ENCODE measurements at regions of chr2 and their contacts with region 1.

Region 1: DNA sequence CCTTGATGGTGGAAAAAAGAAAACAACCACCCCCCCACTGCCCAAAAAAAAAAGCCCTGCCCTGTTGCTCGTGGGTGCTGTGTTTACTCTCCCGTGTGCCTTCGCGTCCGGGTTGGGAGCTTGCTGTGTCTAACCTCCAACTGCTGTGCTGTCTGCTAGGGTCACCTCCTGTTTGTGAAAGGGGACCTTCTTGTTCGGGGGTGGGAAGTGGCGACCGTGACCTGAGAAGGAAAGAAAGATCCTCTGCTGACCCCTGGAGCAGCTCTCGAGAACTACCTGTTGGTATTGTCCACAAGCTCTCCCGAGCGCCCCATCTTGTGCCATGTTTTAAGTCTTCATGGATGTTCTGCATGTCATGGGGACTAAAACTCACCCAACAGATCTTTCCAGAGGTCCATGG is 28.0 kb downstream of the MAL start:
- DNase-seq: no peak
- ATAC-seq: peak; percentile 55; the same call in 1 of the 2 replicates
- H3K4me3 ChIP-seq: no peak overlapping the region
- H3K27ac ChIP-seq: no peak overlapping the region
- H3K4me1 ChIP-seq: peaks cover 0 to 3% of the 10 kb centered on the region in 2 experiments; a peak in 1 of 4 replicates
- H3K27me3 ChIP-seq: peaks cover 12% of the 10 kb centered on the region; the same call in 1 of the 2 replicates
- CTCF ChIP-seq: peak; percentile 20 to 37 (median 32); a peak in 3 of 6 replicates
- POLR2A ChIP-seq: no peak
- RAD21 ChIP-seq: peak; percentile 38; the same call in 1 of the 2 replicates

Region 2: DNA sequence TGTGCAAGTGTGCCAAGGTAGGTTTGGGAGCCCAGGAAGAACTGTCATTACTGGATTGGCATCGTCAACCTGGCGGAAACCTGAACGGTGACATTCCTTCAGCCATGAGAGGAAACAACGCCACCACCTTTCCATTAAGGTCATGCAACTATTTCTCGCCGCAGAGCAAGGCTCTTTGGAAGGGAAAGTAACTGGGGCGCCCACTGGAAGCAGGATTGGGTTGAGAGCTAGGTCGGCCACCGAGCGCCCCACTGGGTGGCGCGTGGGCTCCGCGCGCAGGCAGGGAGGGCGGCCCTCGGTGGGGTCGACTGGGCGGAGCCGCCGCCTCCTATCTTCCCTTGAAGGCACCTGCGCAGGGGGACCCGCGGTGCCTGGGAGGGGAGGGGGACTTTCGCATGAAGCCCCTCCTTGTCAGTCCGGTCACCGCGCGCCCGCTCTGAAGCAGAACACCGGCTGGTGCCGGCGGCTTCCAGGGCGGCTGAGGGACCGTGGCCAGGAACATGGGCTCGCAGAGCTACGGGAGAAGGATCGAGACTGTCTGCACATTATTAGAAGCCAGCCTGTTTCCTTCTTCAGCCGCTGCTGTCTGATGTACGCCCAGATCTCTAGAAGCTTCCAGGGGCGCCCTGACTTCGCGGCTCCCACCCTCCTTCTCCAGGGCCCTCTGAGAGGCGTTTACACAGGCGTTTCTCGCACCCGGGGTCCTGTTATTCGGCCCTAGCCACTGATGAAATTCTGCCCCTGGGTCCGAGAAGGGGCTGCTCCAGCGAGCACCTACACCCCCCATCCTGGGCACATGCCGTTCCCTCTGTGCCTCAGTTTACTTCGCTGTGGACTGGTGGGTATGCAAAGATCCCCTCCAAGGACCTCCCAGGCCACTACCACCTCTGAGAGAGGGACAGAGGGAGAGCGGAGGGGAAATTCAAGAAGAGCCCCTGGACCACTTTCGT is 55.3 kb before region 1 on chr2:
- CTCF ChIA-PET with region 1: no interaction called
- POLR2A ChIA-PET with region 1: no interaction called
- RAD21 ChIA-PET with region 1: no interaction called
- intact Hi-C with region 1: no loop called
- DNase-seq: no peak
- ATAC-seq: no peak
- H3K4me3 ChIP-seq: no peak overlapping the region
- H3K27ac ChIP-seq: no peak overlapping the region
- H3K4me1 ChIP-seq: no peaks in the 10 kb centered on the region
- H3K27me3 ChIP-seq: no peaks in the 10 kb centered on the region
- CTCF ChIP-seq: no peak
- POLR2A ChIP-seq: no peak
- RAD21 ChIP-seq: no peak

Region 3: DNA sequence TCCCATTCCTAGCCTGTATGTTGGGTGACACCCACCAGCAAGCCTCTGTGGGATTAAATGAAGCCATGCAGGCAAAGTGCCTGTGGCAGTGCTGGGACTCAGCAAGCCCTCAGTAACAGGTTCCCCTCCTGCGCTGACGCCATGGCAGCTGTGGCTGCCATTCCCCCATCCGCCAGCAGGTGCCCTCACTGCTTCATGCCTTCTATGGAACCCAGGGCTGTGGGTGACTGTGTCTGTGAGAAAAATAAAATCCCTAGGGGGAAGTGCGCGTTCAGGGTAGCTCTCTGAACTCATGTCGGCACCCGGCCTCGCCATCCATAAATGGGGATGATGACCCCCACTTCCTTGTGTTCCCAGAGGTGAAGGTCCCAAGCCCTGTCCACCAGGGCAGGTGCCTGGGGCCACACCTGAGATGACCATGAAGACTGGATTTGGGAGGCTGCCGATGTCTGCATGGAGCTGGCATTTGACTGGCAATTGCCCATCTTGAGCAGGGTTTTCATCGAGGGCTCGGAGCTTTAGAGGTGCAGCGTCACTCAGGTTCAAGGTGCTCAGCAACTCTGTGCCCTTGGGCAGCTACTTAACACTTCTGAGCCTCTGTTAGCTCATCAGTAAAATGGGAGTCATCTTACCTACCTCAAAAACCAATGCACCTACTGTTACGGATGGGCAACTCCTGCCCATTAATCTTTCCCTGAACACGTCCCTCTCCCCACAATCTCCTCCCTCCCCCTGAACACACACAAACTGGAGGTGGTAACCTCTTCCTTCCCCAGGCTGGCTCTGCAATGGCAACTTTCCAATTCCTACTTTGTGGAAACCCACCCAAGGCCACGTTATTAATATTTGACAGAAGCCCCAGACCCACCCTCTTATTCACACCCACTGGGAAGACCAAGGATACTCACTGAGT is 31.0 kb before region 1 on chr2:
- CTCF ChIA-PET with region 1: interaction called, 30 read pairs
- POLR2A ChIA-PET with region 1: no interaction called
- RAD21 ChIA-PET with region 1: no interaction called
- intact Hi-C with region 1: no loop called
- DNase-seq: peak; percentile 34
- ATAC-seq: peak; percentile 91
- H3K4me3 ChIP-seq: no peak overlapping the region
- H3K27ac ChIP-seq: no peak overlapping the region
- H3K4me1 ChIP-seq: peaks cover 0 to 8% of the 10 kb centered on the region in 2 experiments; a peak in 1 of 4 replicates
- H3K27me3 ChIP-seq: no peaks in the 10 kb centered on the region
- CTCF ChIP-seq: peak; percentile 83 to 95 (median 94); a peak in 5 of 6 replicates
- POLR2A ChIP-seq: no peak
- RAD21 ChIP-seq: peak; percentile 84

Region 4: GRCh38 chr2:95174031-95174542 is 120.5 kb after region 1 on chr2:
- CTCF ChIA-PET with region 1: no interaction called
- POLR2A ChIA-PET with region 1: no interaction called
- RAD21 ChIA-PET with region 1: no interaction called
- intact Hi-C with region 1: no loop called
- DNase-seq: no peak
- ATAC-seq: no peak
- H3K4me3 ChIP-seq: no peak overlapping the region
- H3K27ac ChIP-seq: no peak overlapping the region
- H3K4me1 ChIP-seq: no peaks in the 10 kb centered on the region
- H3K27me3 ChIP-seq: no peaks in the 10 kb centered on the region
- CTCF ChIP-seq: no peak
- POLR2A ChIP-seq: no peak
- RAD21 ChIP-seq: no peak